ENCODE measurements at regions of chr10 and their contacts with region 1.

Region 1: GRCh38 chr10:6445501-6446316 is 134.4 kb downstream of the PRKCQ start:
- DNase-seq: peak; percentile 80
- ATAC-seq: peak; percentile 73
- H3K4me3 Mint-ChIP-seq: no peak overlapping the region
- H3K27ac Mint-ChIP-seq: peak overlapping the region; percentile 25
- H3K4me1 Mint-ChIP-seq: peaks cover 30% of the 10 kb centered on the region
- H3K27me3 Mint-ChIP-seq: no peaks in the 10 kb centered on the region

Region 2: GRCh38 chr10:6363503-6363902 is 82.2 kb before region 1 on chr10:
- CTCF ChIA-PET with region 1: no interaction called
- POLR2A ChIA-PET with region 1: no interaction called
- intact Hi-C with region 1: no loop called
- DNase-seq: no peak
- ATAC-seq: no peak
- H3K4me3 Mint-ChIP-seq: no peak overlapping the region
- H3K27ac Mint-ChIP-seq: no peak overlapping the region
- H3K4me1 Mint-ChIP-seq: no peaks in the 10 kb centered on the region
- H3K27me3 Mint-ChIP-seq: no peaks in the 10 kb centered on the region

Region 3: DNA sequence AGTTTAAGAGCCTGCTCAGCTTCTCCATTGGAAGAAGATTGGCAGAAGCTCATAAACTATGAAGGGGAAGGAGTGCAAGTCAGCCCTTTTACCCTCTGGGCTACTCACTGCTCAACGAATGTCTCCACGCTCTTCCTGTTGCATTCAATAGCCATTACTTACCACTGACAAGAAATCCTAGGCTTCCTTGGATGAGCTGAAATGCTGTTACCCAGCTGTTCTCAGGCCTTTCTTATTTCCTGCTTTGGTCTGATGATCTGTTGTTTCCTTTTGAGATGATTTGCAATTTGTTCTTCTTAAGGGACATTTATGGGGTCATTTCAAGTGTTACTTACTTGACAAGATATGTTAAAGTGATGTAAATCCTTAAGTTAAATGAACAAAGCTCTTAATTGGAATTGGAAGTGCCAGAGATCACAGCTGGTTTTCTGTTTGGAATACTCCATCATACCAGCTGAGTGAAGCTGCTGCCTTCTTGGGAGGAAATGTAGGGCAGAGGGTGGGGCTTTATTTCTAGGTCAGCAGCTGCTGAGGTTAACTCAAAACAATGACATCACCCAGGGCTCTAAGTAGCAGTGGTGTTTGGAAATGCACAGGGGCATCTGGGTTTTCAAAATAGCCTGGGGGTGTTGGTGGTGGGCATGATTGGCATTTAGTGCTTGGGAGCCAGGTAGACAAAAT is 35.6 kb before region 1 on chr10:
- CTCF ChIA-PET with region 1: interaction called, 12 read pairs
- POLR2A ChIA-PET with region 1: no interaction called
- intact Hi-C with region 1: no loop called
- DNase-seq: peak; percentile 28
- ATAC-seq: peak; percentile 72
- H3K4me3 Mint-ChIP-seq: peak overlapping the region; percentile 47
- H3K27ac Mint-ChIP-seq: peak overlapping the region; percentile 76
- H3K4me1 Mint-ChIP-seq: peaks cover 43% of the 10 kb centered on the region
- H3K27me3 Mint-ChIP-seq: peaks cover 3% of the 10 kb centered on the region

Measured in activated CD4-positive, alpha-beta T cell treated with anti-CD3 and anti-CD28 coated beads for 36 hours (primary cell).